ENCODE measurements at regions of chr7 and their contacts with region 1.

Region 1: GRCh38 chr7:77752021-77752420 is 46.2 kb downstream of the TMEM60 start:
- DNase-seq: no peak
- ATAC-seq: peak in 2 of 4 donors; percentile 60 to 68
- H3K4me3 ChIP-seq: no peak overlapping the region
- H3K27ac ChIP-seq: no peak overlapping the region
- H3K4me1 ChIP-seq: peaks cover 0 to 25% (median 2%) of the 10 kb centered on the region in 12 donors
- H3K27me3 ChIP-seq: no peaks in the 10 kb centered on the region
- CTCF ChIP-seq: no peak
- POLR2A ChIP-seq: no peak

Region 2: DNA sequence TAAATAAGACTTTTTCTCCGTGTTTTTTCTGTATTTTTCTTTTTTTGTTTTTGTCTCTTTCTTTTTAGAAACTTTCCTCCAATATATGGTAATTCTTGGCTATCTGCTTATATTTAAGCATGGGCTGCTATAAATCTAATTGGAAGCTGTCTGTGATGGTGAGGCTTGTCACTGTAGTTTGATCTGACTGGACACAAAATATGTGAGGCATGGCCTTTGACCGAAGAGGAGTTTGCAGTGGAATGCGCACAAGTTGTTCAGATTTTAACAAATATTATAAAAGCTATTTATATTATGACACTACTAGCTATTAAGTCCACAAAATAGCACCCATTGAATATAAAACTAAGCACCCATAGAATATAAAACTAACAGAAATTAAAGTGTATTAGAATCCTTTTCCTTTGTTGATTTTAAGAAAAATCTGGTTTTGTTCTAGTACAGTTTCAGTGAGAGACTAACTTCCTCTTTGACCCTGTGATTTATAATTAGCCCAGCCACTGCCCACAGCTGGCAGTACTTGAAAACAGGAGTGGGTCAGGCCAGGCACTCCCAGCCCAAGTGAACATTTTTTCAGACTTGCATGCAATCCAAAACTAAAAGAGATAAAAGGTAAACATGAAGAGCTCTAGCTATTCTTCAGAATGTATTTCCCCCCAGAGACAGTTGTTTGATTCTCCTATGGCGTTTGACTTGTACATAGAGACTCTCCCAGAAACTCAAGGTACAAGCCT is 482.5 kb before region 1 on chr7:
- intact Hi-C with region 1: no loop called
- DNase-seq: peak in 2 of 5 donors; percentile 32 to 44
- ATAC-seq: peak; percentile 65 to 82 (median 75)
- H3K4me3 ChIP-seq: no peak overlapping the region
- H3K27ac ChIP-seq: peak overlapping the region in 10 of 12 donors; percentile 16 to 61 (median 32)
- H3K4me1 ChIP-seq: peaks cover 0 to 14% (median 10%) of the 10 kb centered on the region in 12 donors
- H3K27me3 ChIP-seq: no peaks in the 10 kb centered on the region
- CTCF ChIP-seq: no peak
- POLR2A ChIP-seq: no peak

Region 3: DNA sequence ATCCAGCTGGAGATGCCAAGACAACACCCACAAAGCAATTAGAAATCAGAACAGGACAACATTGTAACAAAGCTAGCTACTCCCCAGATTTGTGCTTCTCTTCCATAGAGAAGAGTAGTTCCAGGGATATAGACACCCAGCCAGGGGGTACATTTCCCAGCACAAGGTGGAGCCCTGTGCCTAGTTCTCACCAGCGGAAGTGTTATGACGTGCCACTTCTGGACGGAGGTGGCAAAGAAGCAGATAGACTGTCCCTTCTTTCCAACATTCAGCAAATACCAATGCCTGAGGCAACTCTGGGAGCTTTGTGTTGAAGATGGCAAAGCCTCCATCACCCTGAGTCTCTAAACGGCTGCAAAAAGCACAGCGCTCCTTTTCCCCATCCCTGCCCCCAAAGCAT is 312.4 kb before region 1 on chr7:
- intact Hi-C with region 1: loop called in 3 of 10 experiments (anchors 5 to 10 kb)
- DNase-seq: peak in 4 of 5 donors; percentile 36 to 58 (median 52)
- ATAC-seq: peak; percentile 64 to 93 (median 90)
- H3K4me3 ChIP-seq: no peak overlapping the region
- H3K27ac ChIP-seq: no peak overlapping the region
- H3K4me1 ChIP-seq: peaks cover 0 to 16% (median 0%) of the 10 kb centered on the region in 12 donors
- H3K27me3 ChIP-seq: no peaks in the 10 kb centered on the region
- CTCF ChIP-seq: peak; percentile 20 to 64 (median 46)
- POLR2A ChIP-seq: no peak

Region 4: DNA sequence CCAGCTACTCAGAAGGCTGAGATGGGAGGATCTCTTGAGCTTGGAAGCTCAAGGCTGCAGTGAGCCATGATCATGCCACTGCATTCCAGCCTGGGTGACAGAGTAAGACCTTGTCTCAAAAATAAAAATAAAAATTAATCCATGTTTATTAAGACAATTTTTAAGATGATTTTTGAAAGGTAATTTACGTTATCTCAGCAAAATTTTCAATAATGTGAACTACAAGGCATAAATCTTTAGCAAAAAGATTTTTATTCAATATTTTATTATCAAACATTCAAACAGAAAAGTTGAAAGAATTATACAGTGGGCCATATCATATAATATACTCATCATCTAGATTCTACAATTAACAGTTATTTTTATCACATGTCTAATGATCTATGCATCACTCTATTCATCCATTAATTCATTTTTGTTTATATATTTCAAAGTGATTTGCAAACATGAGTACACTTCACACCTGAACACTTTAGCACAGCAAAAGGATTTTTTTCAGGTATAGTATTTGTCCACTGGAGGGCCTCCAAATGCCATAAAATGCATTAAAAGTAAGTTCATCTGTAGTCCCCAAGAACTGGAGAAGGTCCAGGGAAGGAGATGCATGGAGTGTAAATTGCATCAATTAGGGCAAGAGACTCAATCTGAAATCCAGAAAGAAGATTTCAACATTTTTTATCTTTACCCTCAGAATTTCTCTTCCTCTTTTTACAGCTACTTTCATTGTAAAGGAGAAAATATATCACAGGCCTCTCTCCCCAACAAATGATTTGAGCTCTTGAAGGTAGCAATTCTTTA is 94.4 kb before region 1 on chr7:
- intact Hi-C with region 1: loop called in 4 of 10 experiments (anchors 2 to 5 kb)
- DNase-seq: no peak
- ATAC-seq: peak in 1 of 4 donors; percentile 32
- H3K4me3 ChIP-seq: no peak overlapping the region
- H3K27ac ChIP-seq: no peak overlapping the region
- H3K4me1 ChIP-seq: peaks cover 0 to 3% (median 0%) of the 10 kb centered on the region in 12 donors
- H3K27me3 ChIP-seq: no peaks in the 10 kb centered on the region
- CTCF ChIP-seq: peak; percentile 19 to 60 (median 46)
- POLR2A ChIP-seq: no peak

Region 5: DNA sequence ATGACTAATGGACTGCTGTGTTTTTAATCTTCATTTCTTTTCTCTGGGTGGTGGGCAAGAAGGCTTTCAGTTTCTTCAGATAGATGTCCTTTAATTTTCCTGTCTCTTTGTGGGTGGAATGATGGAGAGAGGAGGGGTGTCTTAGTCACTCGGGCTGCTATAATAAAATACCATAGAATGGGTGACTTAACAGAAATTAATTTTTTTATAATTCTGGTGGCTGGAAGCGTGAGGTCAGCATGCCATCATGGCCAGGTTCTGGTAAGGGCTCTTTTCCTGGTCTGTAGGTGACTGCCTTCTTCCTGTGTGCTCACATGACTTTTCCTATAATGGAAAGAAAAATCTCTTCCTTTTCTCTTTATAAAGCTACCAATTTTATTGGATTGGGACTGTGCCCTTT is 49.5 kb before region 1 on chr7:
- intact Hi-C with region 1: loop called in 6 of 10 experiments (anchors 5 to 10 kb)
- DNase-seq: no peak
- ATAC-seq: no peak
- H3K4me3 ChIP-seq: no peak overlapping the region
- H3K27ac ChIP-seq: peak overlapping the region in 1 of 12 donors; percentile 30
- H3K4me1 ChIP-seq: peaks cover 0 to 49% (median 32%) of the 10 kb centered on the region in 12 donors
- H3K27me3 ChIP-seq: no peaks in the 10 kb centered on the region
- CTCF ChIP-seq: no peak
- POLR2A ChIP-seq: no peak